BJ (cell line): ENCODE measurements at regions of chrX and their contacts with region 1.

Region 1: GRCh38 chrX:17242470-17242869 is 132.5 kb upstream of the NHS start:
- DNase-seq: no peak
- H3K4me3 ChIP-seq: no peak overlapping the region
- H3K27me3 ChIP-seq: 0 out of 2 replicates have a peak, but pooled peaks cover 1% of the 10 kb centered on the region
- CTCF ChIP-seq: peak; percentile 65

Region 2: GRCh38 chrX:17590892-17591740 is 348.6 kb after region 1 on chrX:
- CTCF ChIA-PET with region 1: interaction called, 13 read pairs
- POLR2A ChIA-PET with region 1: no interaction called
- DNase-seq: no peak
- H3K4me3 ChIP-seq: peak overlapping the region; percentile 19
- H3K27me3 ChIP-seq: no peaks in the 10 kb centered on the region
- CTCF ChIP-seq: peak; percentile 75